AG04450 (cell line): ENCODE measurements at regions of chr21 and their contacts with region 1.

Region 1: GRCh38 chr21:45140346-45140940 is 66.1 kb downstream of the ADARB1 start:
- DNase-seq: peak; percentile 88
- H3K4me3 ChIP-seq: no peak overlapping the region
- H3K27ac ChIP-seq: no peak overlapping the region
- H3K27me3 ChIP-seq: no peaks in the 10 kb centered on the region
- CTCF ChIP-seq: peak; percentile 96

Region 2: GRCh38 chr21:44927587-44928461 is 212.6 kb before region 1 on chr21:
- CTCF ChIA-PET with region 1: interaction called, 6 read pairs
- POLR2A ChIA-PET with region 1: interaction called, 10 read pairs
- DNase-seq: no peak
- H3K4me3 ChIP-seq: no peak overlapping the region
- H3K27ac ChIP-seq: peak overlapping the region; percentile 21
- H3K27me3 ChIP-seq: peaks cover 61% of the 10 kb centered on the region
- CTCF ChIP-seq: peak; percentile 26

Region 3: DNA sequence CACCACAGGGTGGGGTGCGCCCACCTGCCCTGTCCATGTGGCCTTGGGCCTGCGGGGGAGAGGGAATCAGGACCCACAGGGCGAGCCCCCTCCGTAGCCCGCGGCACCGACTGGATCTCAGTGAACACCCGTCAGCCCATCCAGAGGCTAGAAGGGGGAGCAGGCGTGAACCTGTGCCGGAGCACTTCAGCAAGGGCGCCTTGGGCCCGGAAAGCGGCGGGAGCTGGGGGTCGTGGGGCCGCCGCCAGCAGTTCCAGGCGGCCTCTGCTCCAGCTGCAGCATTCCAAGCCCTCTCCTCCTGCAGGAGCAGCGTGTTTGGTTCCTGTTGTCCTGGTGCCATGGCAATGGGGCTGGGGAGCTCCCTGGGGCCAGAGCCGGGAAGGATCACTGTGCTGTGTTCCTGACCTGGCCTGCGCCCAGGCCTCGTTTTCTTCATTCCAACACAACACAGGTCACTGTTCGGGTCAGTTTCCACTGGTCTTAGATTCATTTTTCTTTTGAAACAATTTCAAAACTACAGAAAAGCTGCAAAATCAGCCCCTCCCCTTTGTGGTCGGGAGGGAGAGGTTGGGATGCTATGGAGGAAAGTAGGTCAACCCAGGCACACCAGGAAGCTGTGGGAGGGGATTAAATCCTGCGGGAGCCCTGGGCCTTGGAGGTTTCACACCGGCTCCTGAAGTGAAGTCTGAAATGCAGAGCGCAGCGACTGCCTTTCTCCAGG is 181.8 kb before region 1 on chr21:
- CTCF ChIA-PET with region 1: interaction called, 202 read pairs
- POLR2A ChIA-PET with region 1: interaction called, 4 read pairs
- DNase-seq: no peak
- H3K4me3 ChIP-seq: no peak overlapping the region
- H3K27ac ChIP-seq: no peak overlapping the region
- H3K27me3 ChIP-seq: no peaks in the 10 kb centered on the region
- CTCF ChIP-seq: no peak

Region 4: GRCh38 chr21:45114072-45114471 is 26.4 kb before region 1 on chr21:
- CTCF ChIA-PET with region 1: interaction called, 17 read pairs
- POLR2A ChIA-PET with region 1: no interaction called
- DNase-seq: no peak
- H3K4me3 ChIP-seq: no peak overlapping the region
- H3K27ac ChIP-seq: no peak overlapping the region
- H3K27me3 ChIP-seq: no peaks in the 10 kb centered on the region
- CTCF ChIP-seq: no peak

Region 5: GRCh38 chr21:45161038-45161945 is 20.8 kb after region 1 on chr21:
- CTCF ChIA-PET with region 1: interaction called, 12 read pairs
- POLR2A ChIA-PET with region 1: no interaction called
- DNase-seq: no peak
- H3K4me3 ChIP-seq: no peak overlapping the region
- H3K27ac ChIP-seq: no peak overlapping the region
- H3K27me3 ChIP-seq: no peaks in the 10 kb centered on the region
- CTCF ChIP-seq: no peak

Region 6: GRCh38 chr21:45287438-45288391 is 147.3 kb after region 1 on chr21 and contains the start of gene POFUT2:
- CTCF ChIA-PET with region 1: interaction called, 74 read pairs
- POLR2A ChIA-PET with region 1: interaction called, 4 read pairs
- DNase-seq: peak; percentile 87
- H3K4me3 ChIP-seq: peak within 1 kb of the TSS; percentile 77
- H3K27ac ChIP-seq: no peak within 1 kb of the TSS
- H3K27me3 ChIP-seq: no peaks in the 10 kb centered on the region
- CTCF ChIP-seq: no peak
- polyA plus RNA-seq, gene POFUT2: 34.2 and 35.5 TPM in 2 replicates